Activated naive CD4-positive, alpha-beta T cell treated with anti-CD3 and anti-CD28 coated beads for 36 hours (primary cell): ENCODE measurements at regions of chr2 and their contacts with region 1.

Region 1: GRCh38 chr2:8408560-8409460 is 273.0 kb upstream of the ID2 start:
- DNase-seq: peak; percentile 83
- H3K4me3 Mint-ChIP-seq: no peak overlapping the region
- H3K27ac Mint-ChIP-seq: peak overlapping the region; percentile 64
- H3K4me1 Mint-ChIP-seq: peaks cover 26% of the 10 kb centered on the region
- H3K27me3 Mint-ChIP-seq: peaks cover 13% of the 10 kb centered on the region

Region 2: GRCh38 chr2:7825591-7826312 is 583.1 kb before region 1 on chr2:
- CTCF ChIA-PET with region 1: no interaction called
- intact Hi-C with region 1: loop called (anchors 1 kb)
- DNase-seq: peak; percentile 86
- H3K4me3 Mint-ChIP-seq: no peak overlapping the region
- H3K27ac Mint-ChIP-seq: peak overlapping the region; percentile 86
- H3K4me1 Mint-ChIP-seq: peaks cover 16% of the 10 kb centered on the region
- H3K27me3 Mint-ChIP-seq: no peaks in the 10 kb centered on the region

Region 3: DNA sequence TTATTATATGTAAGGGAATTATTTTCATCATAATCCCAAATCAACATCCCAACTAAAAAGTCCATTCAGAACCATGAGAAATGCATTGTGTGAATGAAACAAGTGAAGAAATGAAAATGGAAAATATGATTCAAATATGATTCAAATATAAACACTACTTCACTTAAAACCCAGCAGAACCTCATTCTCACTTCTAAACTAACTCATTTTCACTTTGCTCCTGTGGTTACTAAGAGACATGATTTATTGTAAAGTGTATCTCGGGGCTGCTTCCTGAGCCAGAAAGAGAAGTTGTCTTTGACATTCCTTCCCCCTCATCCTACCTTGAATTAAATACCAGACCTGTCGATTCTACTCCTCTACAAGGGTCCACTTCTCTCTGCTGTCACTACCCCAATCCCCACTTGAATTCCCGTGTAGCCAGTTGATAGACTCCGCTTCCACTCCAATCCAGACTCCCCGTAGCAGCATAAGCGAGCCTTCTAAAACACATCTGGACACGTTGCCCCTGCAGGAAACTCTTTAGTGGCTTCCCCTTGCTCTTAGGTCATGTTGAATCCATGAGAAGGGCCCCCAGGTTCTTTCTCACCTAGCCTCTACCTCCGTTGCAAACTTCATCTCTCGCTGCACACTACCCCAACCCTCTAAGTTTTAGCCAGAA is 424.0 kb before region 1 on chr2:
- CTCF ChIA-PET with region 1: no interaction called
- intact Hi-C with region 1: loop called (anchors 2 kb)
- DNase-seq: peak; percentile 22
- H3K4me3 Mint-ChIP-seq: peak overlapping the region; percentile 8
- H3K27ac Mint-ChIP-seq: peak overlapping the region; percentile 62
- H3K4me1 Mint-ChIP-seq: peaks cover 20% of the 10 kb centered on the region
- H3K27me3 Mint-ChIP-seq: peaks cover 4% of the 10 kb centered on the region

Region 4: DNA sequence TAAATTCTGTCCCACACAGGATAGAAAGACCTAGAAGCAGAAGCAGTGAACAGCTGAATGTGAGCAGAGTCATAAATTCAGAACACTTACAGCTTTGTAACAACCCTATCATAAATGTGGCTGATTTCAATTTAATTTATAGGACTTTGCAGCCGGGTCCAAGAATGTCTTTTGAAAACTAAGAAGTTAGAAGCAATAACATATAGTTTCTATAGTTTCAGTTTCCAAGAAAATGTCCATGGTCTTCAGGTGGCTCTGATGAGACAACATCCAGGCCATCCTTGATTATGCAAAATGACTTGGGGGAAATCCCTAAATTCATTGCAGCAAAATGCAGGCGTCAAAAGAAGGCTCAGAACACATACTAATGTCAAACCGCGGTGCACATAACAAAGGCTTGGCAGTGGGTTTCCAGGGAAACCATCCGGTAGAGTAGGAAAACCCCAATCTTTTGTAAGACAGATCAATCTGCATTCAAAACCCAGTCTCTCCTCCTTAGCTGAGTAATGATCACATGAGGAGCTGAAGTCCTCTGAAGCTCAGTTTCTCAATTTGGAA is 169.2 kb before region 1 on chr2:
- CTCF ChIA-PET with region 1: no interaction called
- intact Hi-C with region 1: loop called (anchors 1 kb)
- DNase-seq: peak; percentile 75
- H3K4me3 Mint-ChIP-seq: no peak overlapping the region
- H3K27ac Mint-ChIP-seq: no peak overlapping the region
- H3K4me1 Mint-ChIP-seq: peaks cover 18% of the 10 kb centered on the region
- H3K27me3 Mint-ChIP-seq: peaks cover 22% of the 10 kb centered on the region

Region 5: GRCh38 chr2:8456151-8456845 is 47.5 kb after region 1 on chr2:
- CTCF ChIA-PET with region 1: no interaction called
- intact Hi-C with region 1: loop called (anchors 1 kb)
- DNase-seq: peak; percentile 71
- H3K4me3 Mint-ChIP-seq: peak overlapping the region; percentile 51
- H3K27ac Mint-ChIP-seq: no peak overlapping the region
- H3K4me1 Mint-ChIP-seq: peaks cover 18% of the 10 kb centered on the region
- H3K27me3 Mint-ChIP-seq: peaks cover 18% of the 10 kb centered on the region

Region 6: GRCh38 chr2:8514796-8515758 is 106.3 kb after region 1 on chr2:
- CTCF ChIA-PET with region 1: no interaction called
- intact Hi-C with region 1: loop called (anchors 1 kb)
- DNase-seq: peak; percentile 84
- H3K4me3 Mint-ChIP-seq: peak overlapping the region; percentile 42
- H3K27ac Mint-ChIP-seq: peak overlapping the region; percentile 96
- H3K4me1 Mint-ChIP-seq: peaks cover 46% of the 10 kb centered on the region
- H3K27me3 Mint-ChIP-seq: no peaks in the 10 kb centered on the region